Caco-2 (cell line): ENCODE measurements at regions of chr6 and their contacts with region 1.

Region 1: DNA sequence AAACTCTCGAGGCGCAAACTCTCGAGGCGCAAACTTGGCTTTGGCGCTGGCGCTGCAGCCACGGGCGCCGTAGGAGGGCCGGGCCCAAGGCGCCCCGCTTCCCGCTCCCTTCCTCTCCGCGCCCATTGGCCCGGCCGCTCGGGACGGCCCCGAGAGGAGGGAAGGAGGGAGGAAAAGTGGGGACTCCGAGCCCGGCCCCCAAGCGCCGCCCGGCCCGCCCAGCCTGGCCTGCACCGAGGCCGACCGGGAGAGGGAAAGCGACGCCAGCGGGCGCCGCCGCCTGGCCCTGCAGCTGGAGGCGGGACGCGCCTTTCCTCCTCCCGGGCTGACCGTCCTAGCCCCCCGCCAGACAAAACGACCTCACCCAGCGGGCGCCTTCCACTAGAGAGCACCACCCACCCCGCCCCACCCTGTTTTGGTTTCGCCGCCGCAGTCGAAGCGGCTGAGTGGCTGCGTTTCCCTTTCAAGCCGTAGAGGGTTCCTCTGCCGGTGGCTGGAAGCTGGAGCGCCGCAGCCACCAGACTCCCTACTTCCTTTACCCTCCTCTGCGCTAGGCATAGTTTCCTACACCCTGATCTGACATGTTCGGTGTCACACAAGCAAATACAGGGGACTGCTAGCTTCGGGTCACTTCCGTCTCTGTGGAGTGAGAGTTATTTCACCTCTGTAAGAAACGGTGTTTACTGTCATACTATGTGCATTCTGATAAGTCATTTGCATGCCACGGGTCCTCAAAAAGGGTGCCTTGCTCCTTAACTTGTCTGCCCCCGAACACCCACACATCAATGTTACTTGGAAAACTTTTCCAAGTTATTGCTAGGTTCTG is at the start of gene MBOAT1:
- DNase-seq: peak; percentile 91 to 93
- H3K4me3 ChIP-seq: peak within 1 kb of the TSS; percentile 83
- H3K4me3 Mint-ChIP-seq: peak within 1 kb of the TSS; percentile 90
- H3K27ac Mint-ChIP-seq: peak within 1 kb of the TSS; percentile 95
- H3K4me1 ChIP-seq: peaks cover 3% of the 10 kb centered on the region; the same call in 1 of the 2 replicates
- H3K4me1 Mint-ChIP-seq: peaks cover 15% of the 10 kb centered on the region
- H3K27me3 ChIP-seq: no peaks in the 10 kb centered on the region
- H3K27me3 Mint-ChIP-seq: no peaks in the 10 kb centered on the region
- CTCF ChIP-seq: peak in 1 of 2 experiments; percentile 15
- total RNA-seq, gene MBOAT1: 6.8 and 7.3 TPM in 2 replicates

Region 2: DNA sequence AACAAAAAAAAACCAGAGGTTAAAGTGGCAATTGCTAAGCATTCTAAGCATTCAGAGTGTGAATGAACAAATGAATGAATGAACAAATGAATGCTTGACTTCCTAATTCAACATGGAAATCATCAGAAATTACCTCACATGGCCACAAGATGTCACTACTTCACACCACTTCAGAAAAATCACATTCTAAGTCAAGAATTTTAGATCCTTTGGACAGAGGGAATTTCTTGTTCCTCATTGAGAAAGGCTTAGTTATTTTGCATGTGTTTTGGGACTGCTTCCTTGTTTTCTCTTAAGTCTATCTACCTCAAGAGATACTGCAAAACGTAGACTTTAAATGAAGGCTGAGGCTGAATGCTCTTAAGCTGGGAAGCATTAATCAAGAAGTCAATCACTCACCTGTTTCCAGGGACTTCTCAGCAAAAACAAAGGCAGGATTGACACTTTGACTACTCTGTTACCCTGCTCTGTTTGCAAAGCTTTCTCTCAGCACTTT is 120.5 kb before region 1 on chr6:
- CTCF ChIA-PET with region 1: no interaction called
- POLR2A ChIA-PET with region 1: interaction called, 3 read pairs
- intact Hi-C with region 1: loop called (anchors 1 kb)
- DNase-seq: peak in 1 of 2 experiments; percentile 40
- H3K4me3 ChIP-seq: no peak overlapping the region
- H3K4me3 Mint-ChIP-seq: no peak overlapping the region
- H3K27ac Mint-ChIP-seq: no peak overlapping the region
- H3K4me1 ChIP-seq: no peaks in the 10 kb centered on the region
- H3K4me1 Mint-ChIP-seq: no peaks in the 10 kb centered on the region
- H3K27me3 ChIP-seq: no peaks in the 10 kb centered on the region
- H3K27me3 Mint-ChIP-seq: peaks cover 6% of the 10 kb centered on the region
- CTCF ChIP-seq: peak; percentile 51 to 58

Region 3: GRCh38 chr6:20236909-20237600 is 24.4 kb after region 1 on chr6:
- CTCF ChIA-PET with region 1: no interaction called
- POLR2A ChIA-PET with region 1: no interaction called
- intact Hi-C with region 1: loop called (anchors 2 kb)
- DNase-seq: peak in 1 of 2 experiments; percentile 19
- H3K4me3 ChIP-seq: no peak overlapping the region
- H3K4me3 Mint-ChIP-seq: peak overlapping the region; percentile 27
- H3K27ac Mint-ChIP-seq: peak overlapping the region; percentile 86
- H3K4me1 ChIP-seq: peaks cover 28% of the 10 kb centered on the region
- H3K4me1 Mint-ChIP-seq: no peaks in the 10 kb centered on the region
- H3K27me3 ChIP-seq: no peaks in the 10 kb centered on the region
- H3K27me3 Mint-ChIP-seq: no peaks in the 10 kb centered on the region
- CTCF ChIP-seq: no peak

Region 4: GRCh38 chr6:20274137-20274536 is 61.5 kb after region 1 on chr6:
- CTCF ChIA-PET with region 1: interaction called, 3 read pairs
- POLR2A ChIA-PET with region 1: no interaction called
- intact Hi-C with region 1: loop called (anchors 2 kb)
- DNase-seq: peak; percentile 31 to 59
- H3K4me3 ChIP-seq: no peak overlapping the region
- H3K4me3 Mint-ChIP-seq: peak overlapping the region; percentile 57
- H3K27ac Mint-ChIP-seq: peak overlapping the region; percentile 60
- H3K4me1 ChIP-seq: peaks cover 14% of the 10 kb centered on the region
- H3K4me1 Mint-ChIP-seq: peaks cover 18% of the 10 kb centered on the region
- H3K27me3 ChIP-seq: no peaks in the 10 kb centered on the region
- H3K27me3 Mint-ChIP-seq: no peaks in the 10 kb centered on the region
- CTCF ChIP-seq: no peak

Region 5: GRCh38 chr6:20534295-20535262 is 322.0 kb after region 1 on chr6 and contains the start of gene CDKAL1:
- CTCF ChIA-PET with region 1: no interaction called
- POLR2A ChIA-PET with region 1: no interaction called
- intact Hi-C with region 1: loop called (anchors 1 kb)
- DNase-seq: peak; percentile 85 to 90
- H3K4me3 ChIP-seq: peak within 1 kb of the TSS; percentile 87
- H3K4me3 Mint-ChIP-seq: peak within 1 kb of the TSS; percentile 93
- H3K27ac Mint-ChIP-seq: peak within 1 kb of the TSS; percentile 90
- H3K4me1 ChIP-seq: peaks cover 5% of the 10 kb centered on the region; the same call in 1 of the 2 replicates
- H3K4me1 Mint-ChIP-seq: peaks cover 11% of the 10 kb centered on the region
- H3K27me3 ChIP-seq: no peaks in the 10 kb centered on the region
- H3K27me3 Mint-ChIP-seq: no peaks in the 10 kb centered on the region
- CTCF ChIP-seq: no peak
- total RNA-seq, gene CDKAL1: 18.7 and 18.8 TPM in 2 replicates